Heart left ventricle (tissue), 16 donors: ENCODE measurements at regions of chr10 and their contacts with region 1.

Region 1: GRCh38 chr10:28587970-28588290 is 55.0 kb downstream of the WAC start:
- DNase-seq: peak in 1 of 5 donors; percentile 18
- ATAC-seq: peak; percentile 84 to 90 (median 86)
- H3K4me3 ChIP-seq: no peak overlapping the region
- H3K27ac ChIP-seq: peak overlapping the region in 9 of 12 donors; percentile 5 to 53 (median 15)
- H3K4me1 ChIP-seq: peaks cover 6 to 52% (median 32%) of the 10 kb centered on the region in 12 donors
- H3K27me3 ChIP-seq: no peaks in the 10 kb centered on the region
- CTCF ChIP-seq: peak in 9 of 12 donors; percentile 15 to 54 (median 35)
- POLR2A ChIP-seq: no peak

Region 2: DNA sequence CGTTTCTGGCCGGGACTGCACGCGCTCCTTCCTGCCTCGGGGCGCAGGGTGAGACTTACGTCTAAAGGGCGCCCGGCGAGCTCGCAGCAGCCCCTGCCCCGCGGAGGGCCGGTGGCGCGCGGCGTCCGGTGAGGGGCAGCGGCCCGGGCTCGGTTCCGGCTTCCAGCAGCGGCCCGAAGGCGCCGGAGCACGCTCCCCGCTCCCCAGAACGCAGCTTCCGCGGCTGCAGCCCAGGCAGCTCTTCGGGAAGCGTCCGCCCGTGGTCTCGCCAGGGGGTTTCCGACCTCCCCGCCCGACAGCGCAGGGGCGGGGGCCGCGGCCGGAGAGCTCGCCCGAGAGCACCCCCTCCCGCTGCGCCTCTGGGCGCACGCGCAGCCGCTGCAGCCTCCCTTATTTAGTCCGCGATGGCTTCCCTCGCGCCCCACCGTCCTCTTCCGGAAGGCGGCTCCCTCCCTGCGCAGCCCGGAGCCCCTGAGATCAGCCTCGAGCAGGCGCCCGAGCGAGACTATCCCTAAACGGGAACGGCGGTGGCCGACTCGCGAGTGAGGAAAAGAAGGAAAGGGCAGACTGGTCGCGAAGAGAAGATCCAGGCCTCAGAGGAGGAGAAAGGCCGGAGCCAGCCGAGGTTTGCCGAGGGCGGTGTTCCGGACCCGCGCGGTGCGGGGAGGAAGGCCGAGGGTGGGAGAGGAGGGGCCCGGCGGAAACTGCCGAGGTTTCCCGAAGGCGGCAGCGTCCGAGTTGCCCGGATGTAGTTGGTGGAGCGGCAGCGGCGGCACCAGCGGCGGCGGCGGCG is 55.4 kb before region 1 on chr10 and contains the start of gene WAC:
- intact Hi-C with region 1: loop called in 4 of 10 experiments (anchors 5 kb)
- DNase-seq: peak; percentile 97 to 99 (median 97)
- ATAC-seq: peak; percentile 95 to 97 (median 96)
- H3K4me3 ChIP-seq: peak within 1 kb of the TSS; percentile 78 to 99 (median 95)
- H3K27ac ChIP-seq: peak within 1 kb of the TSS; percentile 96 to 100 (median 100)
- H3K4me1 ChIP-seq: peaks cover 0 to 56% (median 29%) of the 10 kb centered on the region in 12 donors
- H3K27me3 ChIP-seq: no peaks in the 10 kb centered on the region
- CTCF ChIP-seq: peak in 4 of 12 donors; percentile 13 to 41 (median 26)
- POLR2A ChIP-seq: peak in 1 of 2 donors; percentile 80
- total RNA-seq, gene WAC: 83.6 to 124 (median 104) TPM

Region 3: GRCh38 chr10:28541717-28542365 is 46.1 kb before region 1 on chr10:
- intact Hi-C with region 1: loop called in 2 of 10 experiments (anchors 5 kb)
- DNase-seq: no peak
- ATAC-seq: peak; percentile 32 to 64 (median 34)
- H3K4me3 ChIP-seq: no peak overlapping the region
- H3K27ac ChIP-seq: no peak overlapping the region
- H3K4me1 ChIP-seq: peaks cover 0 to 56% (median 20%) of the 10 kb centered on the region in 12 donors
- H3K27me3 ChIP-seq: no peaks in the 10 kb centered on the region
- CTCF ChIP-seq: no peak
- POLR2A ChIP-seq: no peak

Region 4: DNA sequence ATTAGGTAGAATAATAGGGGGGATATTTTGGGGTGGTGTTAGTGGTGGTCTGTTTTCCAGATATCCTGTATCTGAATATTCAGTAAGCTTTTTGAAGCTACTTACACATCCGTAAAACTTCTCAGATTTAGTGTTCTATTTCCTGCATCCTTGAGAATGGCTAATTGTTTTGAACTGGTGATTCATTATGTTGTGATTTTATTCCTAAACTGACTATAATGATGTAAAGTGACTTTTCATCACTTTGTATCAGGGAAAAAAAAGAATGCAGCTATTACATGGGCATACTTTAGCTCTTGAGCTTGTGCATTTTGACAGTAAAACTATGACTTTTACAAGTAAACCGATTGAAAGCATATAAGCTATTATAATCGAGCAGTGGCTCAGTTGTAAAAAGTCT is 36.8 kb before region 1 on chr10:
- intact Hi-C with region 1: loop called in 1 of 10 experiments (anchors 5 kb)
- DNase-seq: no peak
- ATAC-seq: no peak
- H3K4me3 ChIP-seq: no peak overlapping the region
- H3K27ac ChIP-seq: peak overlapping the region in 1 of 12 donors; percentile 15
- H3K4me1 ChIP-seq: peaks cover 0 to 77% (median 58%) of the 10 kb centered on the region in 12 donors
- H3K27me3 ChIP-seq: no peaks in the 10 kb centered on the region
- CTCF ChIP-seq: no peak
- POLR2A ChIP-seq: no peak

Region 5: DNA sequence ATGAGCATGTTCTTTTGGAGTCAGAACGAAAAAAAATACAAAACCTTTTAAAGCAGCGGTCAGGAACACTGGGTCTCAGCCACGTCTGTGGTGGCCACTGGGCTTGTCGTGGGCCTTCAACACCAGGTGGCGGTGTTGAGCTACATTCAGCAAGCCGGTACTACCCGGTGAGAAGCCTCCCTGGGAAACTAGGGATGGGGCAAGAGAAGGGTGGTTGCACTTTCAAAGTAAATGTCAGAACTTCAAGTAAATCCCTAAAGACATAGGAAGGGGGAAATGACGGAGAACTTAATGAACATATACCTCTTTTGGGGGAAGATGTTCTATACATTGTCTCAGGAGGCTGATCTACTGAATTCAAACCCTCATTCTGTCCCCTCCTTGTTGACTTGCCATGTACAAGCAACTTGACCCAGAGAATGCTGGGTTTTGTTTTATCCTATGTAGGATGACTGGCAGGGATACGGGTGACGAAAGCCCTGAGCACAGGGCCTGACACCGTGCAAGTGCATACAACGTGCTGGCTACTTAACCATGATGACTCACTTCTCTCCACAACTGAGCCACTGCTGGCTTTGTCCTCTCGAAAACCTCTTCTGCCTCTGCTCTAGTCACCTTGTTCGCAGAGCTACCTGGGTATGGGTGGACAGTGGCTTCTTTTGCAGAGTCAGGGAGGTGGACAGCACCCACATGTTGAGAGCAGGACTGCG is 40.4 kb after region 1 on chr10:
- intact Hi-C with region 1: no loop called
- DNase-seq: peak; percentile 68 to 86 (median 76)
- ATAC-seq: peak; percentile 28 to 93 (median 88)
- H3K4me3 ChIP-seq: no peak overlapping the region
- H3K27ac ChIP-seq: no peak overlapping the region
- H3K4me1 ChIP-seq: peaks cover 0 to 8% (median 0%) of the 10 kb centered on the region in 12 donors
- H3K27me3 ChIP-seq: peaks cover 0 to 10% (median 0%) of the 10 kb centered on the region in 9 donors
- CTCF ChIP-seq: peak; percentile 77 to 98 (median 85)
- POLR2A ChIP-seq: no peak

Region 6: GRCh38 chr10:28734941-28735759 is 147.2 kb after region 1 on chr10:
- intact Hi-C with region 1: no loop called
- DNase-seq: peak in 2 of 5 donors; percentile 14 to 33
- ATAC-seq: peak; percentile 42 to 91 (median 77)
- H3K4me3 ChIP-seq: no peak overlapping the region
- H3K27ac ChIP-seq: peak overlapping the region in 1 of 12 donors; percentile 6
- H3K4me1 ChIP-seq: no peaks in the 10 kb centered on the region
- H3K27me3 ChIP-seq: no peaks in the 10 kb centered on the region
- CTCF ChIP-seq: no peak
- POLR2A ChIP-seq: no peak